ENCODE measurements at regions of chr18 and their contacts with region 1.

Region 1: DNA sequence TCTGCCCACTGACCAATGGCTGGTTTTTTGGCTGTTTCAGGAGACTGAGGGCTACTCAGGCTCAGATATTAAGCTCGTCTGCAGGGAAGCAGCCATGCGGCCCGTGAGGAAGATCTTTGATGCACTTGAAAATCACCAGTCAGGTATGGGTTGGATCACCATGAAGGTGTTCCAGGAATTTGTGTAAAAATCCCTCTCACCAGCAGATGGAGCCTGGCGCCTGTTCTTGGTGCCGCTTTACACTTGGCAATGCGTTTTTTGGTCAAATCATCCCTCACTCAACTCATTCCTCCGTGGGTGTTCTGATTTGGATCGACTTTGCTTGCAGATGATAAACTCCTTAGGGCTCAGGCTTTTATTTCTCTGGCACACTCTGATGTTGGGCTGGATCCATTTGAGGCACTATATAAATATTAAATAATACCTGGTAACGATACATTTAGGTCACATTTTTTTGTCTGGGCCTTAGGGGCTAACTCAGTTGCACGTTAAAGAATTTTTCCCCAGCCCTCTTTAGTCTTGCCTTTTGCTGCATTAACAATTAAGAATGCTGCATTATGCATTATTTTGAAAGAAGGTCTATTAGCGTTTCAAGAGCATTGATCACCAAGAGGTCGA is 50.0 kb downstream of the HDHD2 start:
- DNase-seq: no peak
- ATAC-seq: peak; percentile 76 to 79
- H3K4me3 ChIP-seq: no peak overlapping the region
- H3K27ac ChIP-seq: no peak overlapping the region
- H3K4me1 ChIP-seq: no peaks in the 10 kb centered on the region
- H3K27me3 ChIP-seq: no peaks in the 10 kb centered on the region
- CTCF ChIP-seq: peak; percentile 75

Region 2: DNA sequence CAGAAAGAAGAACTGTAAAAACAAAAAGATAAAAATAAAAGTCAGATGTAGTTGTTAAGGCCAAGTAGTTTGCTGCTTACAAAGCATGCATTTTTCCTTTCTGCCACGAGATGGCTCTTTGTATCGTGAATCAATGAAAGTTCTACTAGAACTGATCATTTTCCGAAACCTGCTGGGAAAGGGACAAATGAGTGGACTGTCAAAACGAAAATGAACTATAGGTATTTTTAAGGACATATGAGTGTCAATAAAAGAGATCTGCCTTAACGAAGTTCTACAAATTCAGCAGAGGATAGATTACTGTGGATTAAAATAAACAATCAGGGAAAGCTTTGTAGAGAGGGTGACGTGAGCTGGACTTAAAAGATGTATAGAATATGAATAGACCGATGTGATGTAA is 49.9 kb before region 1 on chr18:
- intact Hi-C with region 1: no loop called
- DNase-seq: no peak
- ATAC-seq: no peak
- H3K4me3 ChIP-seq: no peak overlapping the region
- H3K27ac ChIP-seq: no peak overlapping the region
- H3K4me1 ChIP-seq: no peaks in the 10 kb centered on the region
- H3K27me3 ChIP-seq: no peaks in the 10 kb centered on the region
- CTCF ChIP-seq: peak; percentile 60

Region 3: GRCh38 chr18:47204908-47205522 is 104.7 kb after region 1 on chr18:
- intact Hi-C with region 1: loop called (anchors 5 kb)
- DNase-seq: no peak
- ATAC-seq: peak in 1 of 2 donors; percentile 52
- H3K4me3 ChIP-seq: no peak overlapping the region
- H3K27ac ChIP-seq: no peak overlapping the region
- H3K4me1 ChIP-seq: no peaks in the 10 kb centered on the region
- H3K27me3 ChIP-seq: no peaks in the 10 kb centered on the region
- CTCF ChIP-seq: peak; percentile 83

Measured in lower lobe of right lung (tissue), 2 donors.